Endothelial cell of umbilical vein (primary cell): ENCODE measurements at regions of chr1 and their contacts with region 1.

Region 1: DNA sequence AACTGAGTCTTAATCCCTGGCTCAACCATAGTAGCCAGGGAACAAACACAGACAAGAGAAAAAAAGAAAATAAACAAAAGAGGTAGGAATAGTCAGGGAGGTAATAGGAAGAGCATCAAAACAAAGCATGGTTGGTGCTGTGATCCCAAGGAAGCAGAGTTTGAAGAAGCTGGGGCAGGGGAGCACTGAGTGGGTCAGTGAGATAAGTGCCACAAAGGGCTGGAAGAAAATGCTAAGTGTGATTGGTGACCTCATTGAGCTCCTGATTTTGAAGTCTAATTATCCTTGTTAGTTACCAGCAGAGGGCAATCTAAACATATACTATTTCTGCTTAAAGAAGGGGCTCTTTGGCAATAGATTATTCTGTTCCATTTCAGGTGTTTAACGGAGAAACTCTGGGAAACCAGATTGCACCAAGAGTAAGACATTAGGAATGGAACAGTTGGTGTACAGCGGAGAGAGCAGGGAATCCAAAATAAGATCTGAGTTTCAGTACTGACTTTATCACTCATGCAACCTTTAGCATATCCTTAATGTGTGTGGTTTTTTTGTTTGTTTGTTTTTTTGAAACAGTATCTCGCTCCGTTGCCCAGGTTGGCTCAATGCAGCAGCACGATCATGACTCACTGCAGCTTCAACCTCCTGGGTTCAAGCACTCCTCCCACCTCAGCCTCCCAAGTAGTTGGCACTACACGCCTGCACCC is 30.7 kb upstream of the KIAA1614 start:
- DNase-seq: peak; percentile 53
- H3K4me3 ChIP-seq: no peak overlapping the region
- H3K27ac ChIP-seq: no peak overlapping the region
- H3K4me1 ChIP-seq: no peaks in the 10 kb centered on the region
- H3K27me3 ChIP-seq: no peaks in the 10 kb centered on the region
- CTCF ChIP-seq: peak; percentile 21 to 38
- POLR2A ChIP-seq: no peak

Region 2: DNA sequence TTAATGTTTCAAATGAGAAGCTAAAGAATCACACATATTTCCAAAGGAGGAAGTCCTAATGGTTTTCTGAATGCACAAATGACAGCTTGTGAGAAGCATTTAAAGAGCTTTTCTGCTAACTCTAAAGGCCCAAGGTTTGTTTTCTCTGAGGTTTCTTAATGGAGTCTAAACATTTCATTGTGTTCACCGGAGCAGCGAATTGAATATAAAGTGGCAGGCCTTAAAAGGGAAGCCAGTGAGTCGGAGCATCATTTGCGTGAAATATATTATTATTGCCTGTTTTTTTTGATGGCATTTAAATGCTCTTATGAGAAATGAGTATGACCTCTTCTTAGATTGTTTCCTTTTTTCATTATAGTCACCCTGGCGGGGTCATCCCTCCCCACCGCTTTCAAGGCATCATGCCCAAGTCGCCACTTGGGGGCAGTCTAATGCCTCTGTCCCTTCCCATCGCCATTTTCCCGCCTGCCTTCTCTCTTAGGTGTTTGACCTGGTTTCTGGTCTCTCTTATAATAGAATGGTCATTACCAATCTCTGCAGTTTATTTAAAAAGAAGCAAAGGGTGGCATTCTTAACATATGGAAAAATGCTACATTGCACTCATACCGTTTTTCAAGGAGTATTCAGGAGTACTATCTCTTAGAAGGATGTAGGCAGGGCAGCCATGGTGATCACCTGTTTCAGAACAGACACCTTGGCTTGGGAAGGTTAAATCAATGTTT is 348.5 kb before region 1 on chr1:
- CTCF ChIA-PET with region 1: interaction called, 10 read pairs
- POLR2A ChIA-PET with region 1: no interaction called
- dilution Hi-C with region 1: no loop called
- intact Hi-C with region 1: no loop called
- DNase-seq: peak; percentile 66
- H3K4me3 ChIP-seq: no peak overlapping the region
- H3K27ac ChIP-seq: no peak overlapping the region
- H3K4me1 ChIP-seq: peaks cover 20% of the 10 kb centered on the region
- H3K27me3 ChIP-seq: peaks cover 6 to 18% of the 10 kb centered on the region in 2 experiments
- CTCF ChIP-seq: peak; percentile 79 to 88
- POLR2A ChIP-seq: no peak

Region 3: GRCh38 chr1:180814859-180815587 is 66.9 kb before region 1 on chr1:
- CTCF ChIA-PET with region 1: no interaction called
- POLR2A ChIA-PET with region 1: no interaction called
- dilution Hi-C with region 1: no loop called
- intact Hi-C with region 1: no loop called
- DNase-seq: no peak
- H3K4me3 ChIP-seq: no peak overlapping the region
- H3K27ac ChIP-seq: no peak overlapping the region
- H3K4me1 ChIP-seq: no peaks in the 10 kb centered on the region
- H3K27me3 ChIP-seq: no peaks in the 10 kb centered on the region
- CTCF ChIP-seq: no peak
- POLR2A ChIP-seq: no peak

Region 4: DNA sequence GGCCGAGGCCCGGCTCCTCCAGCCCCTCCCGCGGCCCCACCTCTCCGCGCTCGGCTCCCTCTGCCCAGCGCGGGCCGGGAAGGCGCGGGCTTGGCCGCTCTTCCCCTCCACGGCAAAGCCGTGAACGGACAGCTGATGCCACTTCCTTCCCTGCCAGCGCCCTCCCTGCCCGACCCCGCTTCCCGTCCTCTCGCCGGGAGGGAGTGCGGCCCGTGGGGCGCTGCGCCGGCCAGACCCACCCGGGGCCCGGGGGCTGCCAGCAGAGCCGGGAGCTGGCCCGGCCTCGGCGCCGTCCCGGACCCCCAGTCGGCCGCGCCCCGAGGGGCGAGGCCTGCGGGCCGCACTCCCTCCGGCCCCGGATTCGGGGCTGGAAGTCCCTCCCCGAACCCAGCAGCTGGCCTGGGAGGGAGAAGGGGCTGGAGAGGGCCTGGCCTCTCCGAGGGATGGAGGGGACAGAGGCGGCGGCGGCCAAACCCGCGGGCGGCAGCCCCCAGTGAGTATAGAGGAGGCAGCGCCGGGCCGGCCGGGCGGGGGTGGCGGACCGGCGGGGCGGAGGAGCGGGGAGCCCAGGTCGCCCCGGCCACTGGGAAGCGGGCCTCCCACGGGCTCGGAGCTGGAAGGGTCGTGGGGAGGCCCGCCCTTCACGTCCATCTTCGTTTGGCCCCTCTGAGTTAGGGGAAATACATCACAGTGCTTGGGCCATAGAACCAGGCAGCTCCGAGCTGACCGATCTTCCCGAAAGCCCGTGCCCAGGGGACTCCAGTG is 31.0 kb after region 1 on chr1 and contains the start of gene KIAA1614:
- CTCF ChIA-PET with region 1: interaction called, 27 read pairs
- POLR2A ChIA-PET with region 1: no interaction called
- dilution Hi-C with region 1: no loop called
- intact Hi-C with region 1: no loop called
- DNase-seq: no peak
- H3K4me3 ChIP-seq: peak within 1 kb of the TSS; percentile 23 to 56 (median 52)
- H3K27ac ChIP-seq: no peak within 1 kb of the TSS
- H3K4me1 ChIP-seq: peaks cover 5% of the 10 kb centered on the region
- H3K27me3 ChIP-seq: no peaks in the 10 kb centered on the region
- CTCF ChIP-seq: no peak
- POLR2A ChIP-seq: no peak
- total RNA-seq, gene KIAA1614: 1.7 and 2.0 TPM in 2 replicates

Region 5: GRCh38 chr1:181021811-181022434 is 140.0 kb after region 1 on chr1:
- CTCF ChIA-PET with region 1: interaction called, 15 read pairs
- POLR2A ChIA-PET with region 1: no interaction called
- dilution Hi-C with region 1: no loop called
- intact Hi-C with region 1: no loop called
- DNase-seq: peak; percentile 96
- H3K4me3 ChIP-seq: peak overlapping the region; percentile 62 to 84 (median 79)
- H3K27ac ChIP-seq: peak overlapping the region; percentile 80
- H3K4me1 ChIP-seq: peaks cover 13% of the 10 kb centered on the region
- H3K27me3 ChIP-seq: peaks cover 5 to 11% of the 10 kb centered on the region in 2 experiments
- CTCF ChIP-seq: no peak
- POLR2A ChIP-seq: peak; percentile 55

Region 6: DNA sequence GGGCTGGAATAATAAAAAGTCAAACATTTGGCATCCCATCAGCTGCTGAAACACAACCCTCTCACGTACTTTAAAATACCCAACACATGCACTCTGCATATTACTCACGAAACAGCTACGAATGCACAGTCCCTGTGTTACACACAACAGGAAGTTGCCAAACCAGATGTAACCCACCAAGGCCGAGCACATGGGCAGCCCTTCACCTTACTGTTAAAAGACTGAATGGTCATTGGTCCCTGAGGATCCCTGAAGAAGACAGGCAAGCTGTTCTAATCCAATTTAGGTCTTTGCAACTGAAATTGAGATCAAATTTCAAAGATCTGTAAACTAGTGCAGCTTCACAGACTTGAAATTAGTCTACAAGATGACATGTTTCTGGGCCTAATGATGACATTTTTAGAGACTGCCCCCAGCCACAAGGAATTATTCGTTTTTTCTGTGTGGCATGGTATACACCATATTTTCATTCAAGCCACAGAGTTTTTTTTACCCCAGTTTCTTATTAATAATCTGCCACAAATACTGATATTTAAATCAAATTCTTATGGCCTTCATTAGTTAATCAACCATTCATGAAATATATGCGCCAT is 181.0 kb after region 1 on chr1:
- CTCF ChIA-PET with region 1: no interaction called
- POLR2A ChIA-PET with region 1: no interaction called
- dilution Hi-C with region 1: no loop called
- intact Hi-C with region 1: no loop called
- DNase-seq: no peak
- H3K4me3 ChIP-seq: no peak overlapping the region
- H3K27ac ChIP-seq: no peak overlapping the region
- H3K4me1 ChIP-seq: no peaks in the 10 kb centered on the region
- H3K27me3 ChIP-seq: peaks cover 10 to 16% of the 10 kb centered on the region in 2 experiments
- CTCF ChIP-seq: no peak
- POLR2A ChIP-seq: no peak

Region 7: DNA sequence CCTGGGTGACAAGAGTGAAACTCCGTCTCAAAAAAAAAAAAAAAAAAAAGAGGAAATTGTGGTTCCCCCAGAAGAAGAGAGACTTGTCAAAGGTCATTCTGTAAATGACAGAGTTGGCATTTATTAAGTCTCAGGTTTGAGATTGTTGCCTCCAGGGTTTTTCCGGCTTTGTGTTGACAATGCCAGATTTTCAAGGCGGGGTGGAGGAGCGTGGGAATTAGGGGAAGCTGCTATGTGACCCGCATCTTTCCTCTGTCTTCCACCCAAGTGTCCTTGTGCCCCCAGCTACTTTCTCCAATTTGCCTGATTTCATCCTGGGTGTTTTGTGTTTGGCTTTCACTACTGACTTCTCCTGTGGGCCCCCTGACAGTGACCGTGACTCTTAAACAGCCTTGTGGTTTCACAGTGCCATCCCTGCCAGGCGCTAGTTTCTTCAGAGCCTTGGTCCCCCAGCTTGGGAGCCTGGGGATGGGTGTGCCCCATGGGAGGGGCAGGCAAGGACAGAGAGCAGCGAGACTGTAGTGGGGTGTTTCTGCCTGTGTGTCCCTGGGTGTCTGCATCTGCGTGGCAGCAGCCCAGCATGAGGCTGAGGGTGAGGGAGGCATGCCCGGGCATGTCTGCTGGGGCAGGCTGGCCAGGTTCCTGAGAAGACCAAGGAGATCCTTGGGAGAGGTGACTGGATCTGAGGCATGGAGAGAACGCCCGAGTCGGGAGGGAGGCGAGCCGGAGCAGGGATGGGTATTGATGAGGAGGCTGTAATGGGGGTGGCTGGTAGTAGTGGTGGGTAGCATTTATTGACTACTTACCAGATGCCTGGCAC is 252.8 kb after region 1 on chr1:
- CTCF ChIA-PET with region 1: interaction called, 125 read pairs
- POLR2A ChIA-PET with region 1: no interaction called
- dilution Hi-C with region 1: no loop called
- intact Hi-C with region 1: no loop called
- DNase-seq: peak; percentile 75
- H3K4me3 ChIP-seq: no peak overlapping the region
- H3K27ac ChIP-seq: peak overlapping the region; percentile 74
- H3K4me1 ChIP-seq: peaks cover 26% of the 10 kb centered on the region
- H3K27me3 ChIP-seq: no peaks in the 10 kb centered on the region
- CTCF ChIP-seq: no peak
- POLR2A ChIP-seq: no peak

Region 8: GRCh38 chr1:181159451-181160140 is 277.6 kb after region 1 on chr1:
- CTCF ChIA-PET with region 1: interaction called, 46 read pairs
- POLR2A ChIA-PET with region 1: no interaction called
- dilution Hi-C with region 1: no loop called
- intact Hi-C with region 1: no loop called
- DNase-seq: peak; percentile 78
- H3K4me3 ChIP-seq: no peak overlapping the region
- H3K27ac ChIP-seq: no peak overlapping the region
- H3K4me1 ChIP-seq: peaks cover 14% of the 10 kb centered on the region
- H3K27me3 ChIP-seq: no peaks in the 10 kb centered on the region
- CTCF ChIP-seq: no peak
- POLR2A ChIP-seq: no peak